Activated naive CD4-positive, alpha-beta T cell treated with anti-CD3 and anti-CD28 coated beads for 36 hours (primary cell): ENCODE measurements at regions of chr2 and their contacts with region 1.

Region 1: GRCh38 chr2:152175458-152176325 is at the start of gene STAM2:
- DNase-seq: peak; percentile 93
- H3K4me3 Mint-ChIP-seq: peak within 1 kb of the TSS; percentile 95
- H3K27ac Mint-ChIP-seq: peak within 1 kb of the TSS; percentile 97
- H3K4me1 Mint-ChIP-seq: peaks cover 35% of the 10 kb centered on the region
- H3K27me3 Mint-ChIP-seq: no peaks in the 10 kb centered on the region
- total RNA-seq, gene STAM2: 9.6 to 10.8 TPM

Region 2: GRCh38 chr2:151638191-151638933 is 537.3 kb before region 1 on chr2:
- CTCF ChIA-PET with region 1: no interaction called
- intact Hi-C with region 1: loop called (anchors 1 kb)
- DNase-seq: peak; percentile 55
- H3K4me3 Mint-ChIP-seq: peak overlapping the region; percentile 50
- H3K27ac Mint-ChIP-seq: peak overlapping the region; percentile 82
- H3K4me1 Mint-ChIP-seq: peaks cover 30% of the 10 kb centered on the region
- H3K27me3 Mint-ChIP-seq: no peaks in the 10 kb centered on the region

Region 3: GRCh38 chr2:151946899-151947822 is 228.5 kb before region 1 on chr2:
- CTCF ChIA-PET with region 1: no interaction called
- intact Hi-C with region 1: no loop called
- DNase-seq: peak; percentile 30
- H3K4me3 Mint-ChIP-seq: no peak overlapping the region
- H3K27ac Mint-ChIP-seq: no peak overlapping the region
- H3K4me1 Mint-ChIP-seq: peaks cover 6% of the 10 kb centered on the region
- H3K27me3 Mint-ChIP-seq: peaks cover 11% of the 10 kb centered on the region

Region 4: DNA sequence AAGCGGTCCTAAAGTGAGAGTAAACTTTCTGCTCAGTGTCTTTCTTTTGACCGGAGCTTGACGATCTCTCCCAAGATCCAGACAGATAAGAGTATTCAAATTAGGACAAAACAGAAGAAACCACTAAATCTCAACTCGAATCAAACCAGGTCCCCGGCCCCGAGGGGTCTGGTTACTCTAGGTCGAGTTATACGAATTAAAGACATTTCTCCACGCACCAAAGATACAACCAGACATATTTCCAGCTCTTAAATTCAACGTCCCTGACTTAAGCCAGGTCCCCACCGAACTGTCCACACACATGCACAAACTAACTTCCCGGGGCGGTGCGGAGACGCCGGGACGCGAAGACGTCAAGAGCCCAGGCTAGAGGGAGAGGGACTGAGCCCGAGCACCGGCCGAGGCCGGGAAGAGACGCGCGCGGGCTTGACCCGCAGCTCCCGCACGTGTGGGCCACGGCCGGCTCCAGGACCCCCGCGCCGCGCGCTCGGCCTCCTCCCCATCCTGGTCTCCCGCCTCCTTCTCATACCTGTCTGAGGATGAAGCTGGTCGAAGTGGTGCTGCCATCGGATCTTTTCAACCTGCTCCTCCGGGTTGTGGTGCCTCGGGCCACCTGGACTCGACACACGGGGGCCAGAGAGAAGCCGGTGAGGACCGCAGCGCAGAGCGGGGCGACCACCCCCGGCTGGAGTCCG is 77.7 kb before region 1 on chr2:
- CTCF ChIA-PET with region 1: no interaction called
- intact Hi-C with region 1: loop called (anchors 2 kb)
- DNase-seq: no peak
- H3K4me3 Mint-ChIP-seq: peak overlapping the region; percentile 78
- H3K27ac Mint-ChIP-seq: no peak overlapping the region
- H3K4me1 Mint-ChIP-seq: peaks cover 13% of the 10 kb centered on the region
- H3K27me3 Mint-ChIP-seq: peaks cover 38% of the 10 kb centered on the region

Region 5: DNA sequence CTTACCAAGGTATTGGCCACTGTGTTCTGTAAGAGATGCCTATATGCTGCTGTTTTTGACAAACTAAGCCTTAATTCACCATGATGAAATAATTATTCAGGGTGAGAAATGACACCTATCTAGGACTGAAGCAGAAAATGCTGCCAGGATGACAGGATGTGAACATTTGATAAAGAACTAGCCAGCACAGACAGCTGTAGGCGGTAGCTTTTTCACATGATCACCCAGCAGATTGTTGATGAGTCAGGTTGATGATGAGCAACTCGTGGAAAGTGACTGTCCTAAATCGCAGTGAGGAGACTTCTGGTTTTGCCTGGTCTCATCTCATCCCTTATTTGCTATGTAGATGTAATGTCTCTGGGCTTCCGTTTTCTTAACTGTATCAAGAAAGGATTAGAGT is 397.5 kb after region 1 on chr2:
- CTCF ChIA-PET with region 1: interaction called, 4 read pairs
- intact Hi-C with region 1: loop called (anchors 1 kb)
- DNase-seq: peak; percentile 75
- H3K4me3 Mint-ChIP-seq: no peak overlapping the region
- H3K27ac Mint-ChIP-seq: no peak overlapping the region
- H3K4me1 Mint-ChIP-seq: peaks cover 7% of the 10 kb centered on the region
- H3K27me3 Mint-ChIP-seq: peaks cover 9% of the 10 kb centered on the region

Region 6: DNA sequence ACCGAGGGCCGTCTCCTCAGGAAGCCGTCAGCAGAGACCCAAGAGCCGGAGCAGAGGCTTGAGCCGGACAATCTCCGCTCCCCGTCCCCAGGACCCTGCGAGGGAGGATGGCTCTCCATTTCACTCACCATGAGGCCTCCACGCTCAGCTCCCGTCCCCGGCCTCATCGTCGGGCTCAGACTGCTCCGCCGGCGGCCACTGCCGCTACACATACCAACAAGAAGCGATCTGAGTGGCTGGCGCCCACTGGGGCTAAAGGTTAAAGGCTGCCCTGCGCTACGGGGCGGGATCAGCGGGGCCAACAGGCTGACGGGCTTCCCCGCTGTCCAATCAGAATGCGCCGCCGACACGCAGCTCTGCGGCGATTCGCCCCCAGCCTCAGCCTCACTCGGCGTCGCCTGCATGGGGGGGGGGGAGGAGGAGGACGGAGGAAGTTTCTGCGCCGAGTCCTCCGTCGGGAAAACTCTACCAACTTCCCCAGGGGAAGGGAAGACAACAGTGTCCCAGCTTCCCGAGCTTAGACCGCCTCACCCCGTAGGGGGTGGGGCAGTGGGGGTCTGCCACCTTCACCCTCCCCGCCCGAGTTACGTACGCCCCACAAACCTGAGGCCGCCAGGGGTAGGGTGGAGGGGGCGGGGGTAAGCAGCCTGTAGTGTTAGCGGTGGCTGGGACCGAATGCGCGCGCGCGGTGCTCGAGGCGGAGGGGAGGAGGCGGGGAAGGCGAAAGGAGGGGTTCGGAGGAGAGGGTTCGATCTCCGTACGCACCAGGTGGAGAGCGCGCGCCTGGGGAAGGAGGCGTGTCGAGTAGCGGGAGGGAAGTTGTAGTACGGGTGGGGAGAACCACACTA is 541.8 kb after region 1 on chr2 and contains the start of gene PRPF40A:
- CTCF ChIA-PET with region 1: no interaction called
- intact Hi-C with region 1: loop called (anchors 1 kb)
- DNase-seq: peak; percentile 98
- H3K4me3 Mint-ChIP-seq: peak within 1 kb of the TSS; percentile 100
- H3K27ac Mint-ChIP-seq: peak within 1 kb of the TSS; percentile 99
- H3K4me1 Mint-ChIP-seq: peaks cover 52% of the 10 kb centered on the region
- H3K27me3 Mint-ChIP-seq: no peaks in the 10 kb centered on the region
- total RNA-seq, gene PRPF40A: 123 to 128 TPM

Region 7: DNA sequence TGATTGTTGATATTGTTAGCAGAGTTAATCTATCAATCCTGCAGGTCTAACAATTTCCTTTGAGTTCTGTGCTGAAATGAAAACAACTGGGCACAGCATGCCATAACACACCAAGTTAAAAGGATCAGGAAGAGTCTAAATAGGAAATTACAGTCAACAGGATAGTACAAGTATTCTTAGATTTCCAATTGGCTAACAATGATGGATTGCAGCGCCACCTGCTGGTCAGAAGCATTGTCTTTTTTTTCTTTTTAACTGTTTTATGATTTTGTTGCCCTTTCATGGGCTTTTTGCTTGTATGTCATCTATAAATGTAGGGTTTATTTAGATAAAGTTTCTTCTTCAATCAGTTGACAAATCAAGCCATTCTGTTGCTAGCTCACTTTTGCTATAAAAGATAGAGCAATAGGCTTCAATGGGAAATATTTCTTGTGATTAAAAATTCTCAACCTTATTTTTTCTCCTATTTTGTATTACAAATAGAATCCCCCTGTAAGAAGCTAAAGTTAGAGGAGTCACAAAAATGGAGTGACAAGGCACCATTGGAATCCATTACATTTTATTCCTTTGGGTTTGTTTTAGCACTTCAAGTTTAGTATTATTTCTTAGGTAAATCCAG is 1343.7 kb after region 1 on chr2:
- CTCF ChIA-PET with region 1: no interaction called
- intact Hi-C with region 1: loop called (anchors 1 kb)
- DNase-seq: peak; percentile 73
- H3K4me3 Mint-ChIP-seq: no peak overlapping the region
- H3K27ac Mint-ChIP-seq: no peak overlapping the region
- H3K4me1 Mint-ChIP-seq: no peaks in the 10 kb centered on the region
- H3K27me3 Mint-ChIP-seq: peaks cover 20% of the 10 kb centered on the region